ENCODE measurements at regions of chr17 and their contacts with region 1.

Region 1: DNA sequence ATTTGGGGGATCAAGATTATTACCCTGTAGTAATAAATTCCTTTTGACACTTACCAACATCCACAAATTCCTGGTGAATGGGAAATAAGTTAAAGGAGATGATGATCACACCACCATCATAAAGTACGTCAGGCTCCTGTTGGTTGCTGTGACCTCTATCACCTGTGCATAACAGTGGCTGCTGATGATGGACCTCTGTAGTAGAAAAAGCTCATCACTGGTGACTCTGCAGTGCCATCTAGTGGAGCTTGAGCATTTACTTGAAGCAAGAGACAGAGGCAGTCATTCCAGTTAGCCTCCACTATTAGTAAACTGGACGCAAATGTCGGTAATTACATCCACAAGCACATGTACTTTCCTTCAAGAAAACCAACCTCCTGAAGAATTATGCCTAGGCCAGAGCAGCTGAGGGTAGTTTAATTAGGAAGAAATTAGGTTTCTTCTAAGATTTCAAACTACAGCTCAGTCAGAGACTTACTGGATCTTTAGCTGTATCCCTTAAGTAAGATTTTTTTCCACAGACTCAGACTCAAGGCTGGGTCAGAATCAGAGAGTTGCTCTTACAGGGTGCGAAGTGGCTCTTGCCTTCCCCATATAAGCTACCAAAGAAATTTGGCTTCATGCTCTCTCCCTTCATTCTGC is 39.3 kb downstream of the CYB561 start:
- DNase-seq: no peak
- ATAC-seq: peak; percentile 94
- H3K4me3 Mint-ChIP-seq: no peak overlapping the region
- H3K27ac Mint-ChIP-seq: no peak overlapping the region
- H3K4me1 Mint-ChIP-seq: peaks cover 2% of the 10 kb centered on the region
- H3K27me3 Mint-ChIP-seq: no peaks in the 10 kb centered on the region
- CTCF ChIP-seq: peak; percentile 57

Region 2: GRCh38 chr17:62671583-62672312 is 735.1 kb before region 1 on chr17:
- CTCF ChIA-PET with region 1: interaction called, 30 read pairs
- POLR2A ChIA-PET with region 1: no interaction called
- intact Hi-C with region 1: loop called (anchors 1 kb)
- DNase-seq: no peak
- ATAC-seq: no peak
- H3K4me3 Mint-ChIP-seq: no peak overlapping the region
- H3K27ac Mint-ChIP-seq: no peak overlapping the region
- H3K4me1 Mint-ChIP-seq: no peaks in the 10 kb centered on the region
- H3K27me3 Mint-ChIP-seq: no peaks in the 10 kb centered on the region
- CTCF ChIP-seq: no peak

Region 3: DNA sequence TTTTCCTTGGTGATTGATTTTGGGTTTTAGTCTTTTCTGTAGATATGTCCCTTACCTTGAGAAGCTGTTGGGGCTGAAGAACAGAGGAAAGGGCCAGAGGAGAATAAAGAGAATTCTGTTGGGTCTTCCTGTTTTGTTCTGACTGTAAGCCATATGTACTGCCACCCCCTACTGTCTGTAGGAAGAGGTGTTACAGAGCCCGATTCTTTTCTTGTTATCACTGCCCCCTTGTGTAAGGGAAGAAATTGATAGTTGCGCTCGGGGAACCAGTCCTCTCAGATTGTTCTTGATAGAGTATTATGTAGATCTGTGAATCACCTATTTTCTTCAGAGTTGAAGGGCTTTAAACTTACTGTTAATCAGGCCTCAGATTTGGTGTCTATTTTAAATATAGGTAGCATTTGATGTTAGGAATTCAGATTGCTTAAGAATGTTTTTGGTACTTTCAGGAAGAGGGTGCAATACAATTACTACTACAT is 438.3 kb before region 1 on chr17:
- CTCF ChIA-PET with region 1: interaction called, 5 read pairs
- POLR2A ChIA-PET with region 1: no interaction called
- intact Hi-C with region 1: loop called (anchors 1 kb)
- DNase-seq: no peak
- ATAC-seq: peak; percentile 57
- H3K4me3 Mint-ChIP-seq: peak overlapping the region; percentile 60
- H3K27ac Mint-ChIP-seq: no peak overlapping the region
- H3K4me1 Mint-ChIP-seq: peaks cover 25% of the 10 kb centered on the region
- H3K27me3 Mint-ChIP-seq: peaks cover 1% of the 10 kb centered on the region
- CTCF ChIP-seq: peak; percentile 63

Region 4: DNA sequence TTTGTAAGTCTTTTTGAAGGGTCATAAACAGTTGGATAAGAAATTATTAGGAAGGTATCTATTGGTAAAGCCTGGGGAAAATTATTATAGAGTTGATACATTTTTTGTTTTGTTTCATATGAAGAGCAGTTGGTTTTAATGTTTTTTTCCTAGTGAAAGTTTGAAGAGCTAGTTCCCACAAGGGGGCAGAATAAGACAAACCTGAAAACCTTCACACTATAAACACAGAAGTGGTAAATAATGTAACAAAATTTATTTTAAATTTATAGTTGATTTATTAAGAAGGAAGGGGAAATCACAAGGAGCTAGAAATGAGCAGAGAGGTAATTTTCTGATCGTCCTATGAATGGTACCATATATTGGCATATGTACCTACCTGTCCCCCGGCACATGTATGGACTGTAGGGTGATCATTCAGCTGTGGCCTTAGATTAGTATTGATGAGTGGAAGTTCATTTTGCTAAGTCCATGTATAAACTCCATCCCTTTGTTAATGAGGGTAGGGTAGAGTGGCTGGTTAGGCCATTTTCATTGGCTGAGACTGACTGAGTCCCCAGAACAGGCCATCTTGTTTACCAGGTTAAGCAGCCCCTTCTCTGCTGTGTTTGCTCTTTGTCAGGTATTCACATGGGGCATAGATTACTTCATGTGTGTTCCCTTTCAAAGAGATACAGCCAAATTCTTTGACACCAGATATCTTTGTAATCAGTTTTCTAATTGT is 324.4 kb before region 1 on chr17:
- CTCF ChIA-PET with region 1: interaction called, 81 read pairs
- POLR2A ChIA-PET with region 1: no interaction called
- intact Hi-C with region 1: loop called (anchors 1 kb)
- DNase-seq: no peak
- ATAC-seq: no peak
- H3K4me3 Mint-ChIP-seq: no peak overlapping the region
- H3K27ac Mint-ChIP-seq: no peak overlapping the region
- H3K4me1 Mint-ChIP-seq: no peaks in the 10 kb centered on the region
- H3K27me3 Mint-ChIP-seq: no peaks in the 10 kb centered on the region
- CTCF ChIP-seq: no peak

Region 5: GRCh38 chr17:63196772-63197335 is 210.0 kb before region 1 on chr17:
- CTCF ChIA-PET with region 1: interaction called, 3 read pairs
- POLR2A ChIA-PET with region 1: no interaction called
- intact Hi-C with region 1: loop called (anchors 5 kb)
- DNase-seq: no peak
- ATAC-seq: peak; percentile 52
- H3K4me3 Mint-ChIP-seq: peak overlapping the region; percentile 13
- H3K27ac Mint-ChIP-seq: peak overlapping the region; percentile 50
- H3K4me1 Mint-ChIP-seq: peaks cover 44% of the 10 kb centered on the region
- H3K27me3 Mint-ChIP-seq: peaks cover 2% of the 10 kb centered on the region
- CTCF ChIP-seq: no peak

Region 6: DNA sequence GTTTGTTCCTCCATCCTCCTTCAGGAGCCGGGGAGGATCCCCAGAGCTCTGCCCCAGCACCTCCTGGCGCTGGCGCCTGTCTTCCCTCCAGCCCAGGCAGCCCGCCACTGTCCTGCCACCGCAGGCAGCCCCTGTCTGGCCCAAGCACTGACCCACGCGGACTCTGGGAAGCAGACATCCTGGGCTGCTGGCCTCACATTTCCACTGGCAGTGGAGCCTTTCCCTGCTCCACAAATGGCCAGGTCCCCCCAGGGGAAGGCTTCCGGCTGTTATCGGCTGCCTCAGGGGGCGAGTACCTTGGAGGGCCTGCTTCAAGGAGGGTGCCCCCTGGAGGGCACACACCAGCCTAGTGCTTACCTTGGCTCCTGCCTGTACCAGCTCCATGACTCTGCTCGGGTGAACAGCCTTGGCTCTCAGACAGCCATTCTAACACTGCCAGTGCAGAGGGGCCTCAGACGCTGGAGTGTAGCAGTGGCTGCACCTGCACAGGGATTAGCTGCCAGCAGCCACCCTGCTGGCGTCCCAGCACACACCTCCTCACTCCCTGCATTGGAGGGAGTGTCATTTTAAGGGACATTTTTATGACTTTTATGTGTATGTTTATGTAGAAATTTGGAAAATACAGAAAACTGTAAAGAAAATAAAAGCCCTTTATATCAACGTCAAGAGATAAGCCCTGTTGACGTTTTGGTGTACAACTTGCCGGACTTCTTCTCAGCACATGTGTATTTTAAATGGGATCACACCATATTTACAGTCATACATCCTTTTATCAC is 91.1 kb after region 1 on chr17:
- CTCF ChIA-PET with region 1: no interaction called
- POLR2A ChIA-PET with region 1: no interaction called
- intact Hi-C with region 1: no loop called
- DNase-seq: no peak
- ATAC-seq: peak; percentile 28
- H3K4me3 Mint-ChIP-seq: no peak overlapping the region
- H3K27ac Mint-ChIP-seq: no peak overlapping the region
- H3K4me1 Mint-ChIP-seq: peaks cover under 1% of the 10 kb centered on the region
- H3K27me3 Mint-ChIP-seq: peaks cover 14% of the 10 kb centered on the region
- CTCF ChIP-seq: no peak

Region 7: DNA sequence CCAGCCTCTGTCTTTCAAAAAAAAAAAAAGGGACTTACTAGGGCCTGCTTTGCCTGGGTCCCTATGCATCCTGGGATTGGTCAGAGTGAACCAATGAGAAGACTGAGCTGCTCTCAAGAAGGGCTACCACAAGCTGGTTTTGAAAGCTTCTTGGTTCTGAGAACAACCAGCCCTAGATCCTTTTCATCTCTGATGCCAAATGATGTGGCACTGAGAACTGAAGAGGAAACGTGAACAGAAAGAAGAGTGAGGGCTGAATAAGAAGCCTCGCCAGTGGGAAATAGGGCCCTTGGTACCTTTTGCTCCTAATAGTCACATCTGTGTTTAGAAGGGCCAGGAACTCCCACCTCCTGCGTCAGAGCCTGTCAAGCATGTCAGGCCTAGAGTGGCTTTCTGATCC is 204.5 kb after region 1 on chr17:
- CTCF ChIA-PET with region 1: interaction called, 14 read pairs
- POLR2A ChIA-PET with region 1: no interaction called
- intact Hi-C with region 1: no loop called
- DNase-seq: no peak
- ATAC-seq: no peak
- H3K4me3 Mint-ChIP-seq: no peak overlapping the region
- H3K27ac Mint-ChIP-seq: no peak overlapping the region
- H3K4me1 Mint-ChIP-seq: no peaks in the 10 kb centered on the region
- H3K27me3 Mint-ChIP-seq: no peaks in the 10 kb centered on the region
- CTCF ChIP-seq: no peak